ENCODE measurements at regions of chr1 and their contacts with region 1.

Region 1: GRCh38 chr1:211323156-211324063 is 3.2 kb upstream of the TRAF5 start:
- DNase-seq: peak; percentile 72 to 84 (median 84)
- H3K4me3 ChIP-seq: no peak overlapping the region
- H3K27ac ChIP-seq: no peak overlapping the region
- H3K4me1 ChIP-seq: peaks cover 8 to 38% (median 25%) of the 10 kb centered on the region in 4 experiments
- H3K27me3 ChIP-seq: no peaks in the 10 kb centered on the region

Region 2: GRCh38 chr1:211335522-211336157 is 12.2 kb after region 1 on chr1:
- CTCF ChIA-PET with region 1: interaction called, 109 read pairs
- POLR2A ChIA-PET with region 1: interaction called, 5 read pairs
- DNase-seq: no peak
- H3K4me3 ChIP-seq: peak overlapping the region in 4 of 7 experiments; percentile 7 to 49 (median 41)
- H3K27ac ChIP-seq: peak overlapping the region in 1 of 2 experiments; percentile 67
- H3K4me1 ChIP-seq: peaks cover 11 to 68% (median 55%) of the 10 kb centered on the region in 4 experiments
- H3K27me3 ChIP-seq: no peaks in the 10 kb centered on the region

Region 3: GRCh38 chr1:211345719-211346118 is 22.3 kb after region 1 on chr1:
- CTCF ChIA-PET with region 1: interaction called, 109 read pairs
- POLR2A ChIA-PET with region 1: no interaction called
- DNase-seq: no peak
- H3K4me3 ChIP-seq: no peak overlapping the region
- H3K27ac ChIP-seq: no peak overlapping the region
- H3K4me1 ChIP-seq: peaks cover 11 to 55% (median 43%) of the 10 kb centered on the region in 4 experiments
- H3K27me3 ChIP-seq: no peaks in the 10 kb centered on the region

Region 4: GRCh38 chr1:211356723-211357407 is 33.5 kb after region 1 on chr1:
- CTCF ChIA-PET with region 1: interaction called, 15 read pairs
- POLR2A ChIA-PET with region 1: interaction called, 3 read pairs
- DNase-seq: no peak
- H3K4me3 ChIP-seq: no peak overlapping the region
- H3K27ac ChIP-seq: no peak overlapping the region
- H3K4me1 ChIP-seq: peaks cover 6 to 27% (median 19%) of the 10 kb centered on the region in 4 experiments
- H3K27me3 ChIP-seq: no peaks in the 10 kb centered on the region

Region 5: DNA sequence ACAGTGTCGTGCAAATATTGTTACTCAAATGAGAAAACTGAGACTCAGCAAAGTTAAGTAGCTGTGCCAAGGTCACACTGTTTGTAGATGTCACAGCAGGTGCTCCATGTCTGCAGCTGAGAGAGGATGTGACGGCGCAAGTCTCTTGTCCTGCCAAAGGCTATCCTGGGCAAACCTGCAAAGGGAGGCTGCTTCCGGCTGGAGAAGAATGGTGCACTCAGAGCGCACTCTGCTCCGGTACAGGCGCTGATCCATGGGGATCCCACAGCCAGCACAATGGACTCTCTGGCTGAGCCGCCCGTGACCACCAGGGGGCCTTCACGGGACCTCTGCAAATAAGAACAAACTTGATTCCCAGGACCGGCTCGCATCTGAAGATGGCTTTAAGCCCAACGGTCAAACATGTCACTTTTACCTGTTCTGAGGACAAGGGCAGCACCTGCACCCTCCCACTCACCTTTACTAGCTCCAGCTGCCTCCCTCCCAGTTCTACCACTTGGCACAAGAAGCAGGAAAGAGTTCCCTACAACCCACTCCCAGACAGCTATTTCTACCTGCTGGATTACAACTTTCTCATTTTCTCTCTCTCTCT is 146.6 kb after region 1 on chr1:
- CTCF ChIA-PET with region 1: interaction called, 16 read pairs
- POLR2A ChIA-PET with region 1: interaction called, 4 read pairs
- DNase-seq: peak; percentile 37 to 44 (median 41)
- H3K4me3 ChIP-seq: no peak overlapping the region
- H3K27ac ChIP-seq: no peak overlapping the region
- H3K4me1 ChIP-seq: peaks cover 5 to 32% (median 22%) of the 10 kb centered on the region in 4 experiments
- H3K27me3 ChIP-seq: no peaks in the 10 kb centered on the region

Region 6: GRCh38 chr1:211476200-211476849 is 152.9 kb after region 1 on chr1:
- CTCF ChIA-PET with region 1: interaction called, 43 read pairs
- POLR2A ChIA-PET with region 1: no interaction called
- DNase-seq: peak; percentile 82 to 93 (median 88)
- H3K4me3 ChIP-seq: no peak overlapping the region
- H3K27ac ChIP-seq: no peak overlapping the region
- H3K4me1 ChIP-seq: peaks cover 0 to 19% (median 4%) of the 10 kb centered on the region in 4 experiments
- H3K27me3 ChIP-seq: peaks cover 0 to 3% (median 0%) of the 10 kb centered on the region in 5 experiments

Region 7: GRCh38 chr1:211654838-211655787 is 331.7 kb after region 1 on chr1:
- CTCF ChIA-PET with region 1: interaction called, 22 read pairs
- POLR2A ChIA-PET with region 1: no interaction called
- DNase-seq: peak; percentile 83 to 90 (median 83)
- H3K4me3 ChIP-seq: no peak overlapping the region
- H3K27ac ChIP-seq: no peak overlapping the region
- H3K4me1 ChIP-seq: no peaks in the 10 kb centered on the region
- H3K27me3 ChIP-seq: peaks cover 0 to 3% (median 0%) of the 10 kb centered on the region in 5 experiments

Measured in common myeloid progenitor, CD34-positive (primary cell).